ENCODE measurements at regions of chrX and their contacts with region 1.

Region 1: DNA sequence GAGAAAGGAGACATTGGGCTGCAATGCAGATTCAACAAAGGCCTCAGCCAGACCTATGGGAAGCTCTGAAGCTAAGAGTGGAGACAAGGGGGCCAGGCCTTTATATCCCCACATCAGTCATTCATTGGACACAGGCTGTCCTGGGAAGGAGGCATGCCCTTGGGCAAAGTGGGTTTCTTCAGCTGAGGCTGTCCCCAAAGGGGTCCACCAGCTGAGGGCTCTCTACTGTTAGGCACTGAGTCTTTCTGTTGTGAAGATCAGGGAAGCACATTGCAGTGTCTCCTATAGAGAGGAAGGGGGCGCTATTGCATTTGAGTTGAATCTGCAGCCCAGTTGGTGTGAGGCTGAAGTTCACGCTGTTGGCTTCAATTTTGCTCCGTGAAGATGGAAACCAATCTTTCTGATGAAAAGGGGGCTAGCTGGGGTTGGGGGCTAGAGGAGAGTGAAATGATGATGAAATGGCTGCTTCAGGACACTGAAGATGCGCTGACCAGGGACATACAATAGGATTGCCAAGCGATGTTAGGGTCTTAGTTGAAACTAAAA is 48.0 kb downstream of the SLC25A5 start:
- DNase-seq: peak; percentile 75
- ATAC-seq: peak; percentile 65
- H3K4me3 ChIP-seq: no peak overlapping the region
- H3K27ac ChIP-seq: no peak overlapping the region
- H3K4me1 ChIP-seq: peaks cover 4% of the 10 kb centered on the region
- H3K27me3 ChIP-seq: no peaks in the 10 kb centered on the region
- CTCF ChIP-seq: peak; percentile 91

Region 2: GRCh38 chrX:119417844-119418243 is 98.4 kb before region 1 on chrX:
- CTCF ChIA-PET with region 1: no interaction called
- POLR2A ChIA-PET with region 1: no interaction called
- intact Hi-C with region 1: loop called (anchors 2 kb)
- DNase-seq: no peak
- ATAC-seq: peak; percentile 46
- H3K4me3 ChIP-seq: no peak overlapping the region
- H3K27ac ChIP-seq: no peak overlapping the region
- H3K4me1 ChIP-seq: no peaks in the 10 kb centered on the region
- H3K27me3 ChIP-seq: no peaks in the 10 kb centered on the region
- CTCF ChIP-seq: peak; percentile 47

Region 3: DNA sequence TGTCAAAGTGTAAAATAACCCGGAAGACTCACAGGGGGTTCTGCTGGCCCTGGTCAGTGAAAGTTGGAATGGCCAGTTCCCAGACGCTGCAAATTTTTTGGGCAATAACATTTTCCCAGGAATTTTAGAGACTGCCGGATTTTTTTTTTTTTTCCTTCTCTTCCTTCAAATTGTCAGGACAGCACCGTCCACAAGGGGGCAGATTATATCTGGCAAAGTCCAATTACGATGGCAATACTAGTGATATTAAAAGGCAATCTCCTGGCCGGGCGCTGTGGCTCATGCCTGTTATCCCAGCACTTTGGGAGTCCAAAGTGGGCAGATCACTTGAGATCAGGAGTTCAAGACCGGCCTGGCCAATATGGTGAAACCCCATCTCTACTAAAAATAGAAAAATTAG is 27.5 kb before region 1 on chrX:
- CTCF ChIA-PET with region 1: interaction called, 6 read pairs
- POLR2A ChIA-PET with region 1: no interaction called
- intact Hi-C with region 1: loop called (anchors 1 kb)
- DNase-seq: peak; percentile 74
- ATAC-seq: peak; percentile 50; the same call in 1 of the 2 replicates
- H3K4me3 ChIP-seq: no peak overlapping the region
- H3K27ac ChIP-seq: no peak overlapping the region
- H3K4me1 ChIP-seq: no peaks in the 10 kb centered on the region
- H3K27me3 ChIP-seq: no peaks in the 10 kb centered on the region
- CTCF ChIP-seq: peak; percentile 64

Region 4: DNA sequence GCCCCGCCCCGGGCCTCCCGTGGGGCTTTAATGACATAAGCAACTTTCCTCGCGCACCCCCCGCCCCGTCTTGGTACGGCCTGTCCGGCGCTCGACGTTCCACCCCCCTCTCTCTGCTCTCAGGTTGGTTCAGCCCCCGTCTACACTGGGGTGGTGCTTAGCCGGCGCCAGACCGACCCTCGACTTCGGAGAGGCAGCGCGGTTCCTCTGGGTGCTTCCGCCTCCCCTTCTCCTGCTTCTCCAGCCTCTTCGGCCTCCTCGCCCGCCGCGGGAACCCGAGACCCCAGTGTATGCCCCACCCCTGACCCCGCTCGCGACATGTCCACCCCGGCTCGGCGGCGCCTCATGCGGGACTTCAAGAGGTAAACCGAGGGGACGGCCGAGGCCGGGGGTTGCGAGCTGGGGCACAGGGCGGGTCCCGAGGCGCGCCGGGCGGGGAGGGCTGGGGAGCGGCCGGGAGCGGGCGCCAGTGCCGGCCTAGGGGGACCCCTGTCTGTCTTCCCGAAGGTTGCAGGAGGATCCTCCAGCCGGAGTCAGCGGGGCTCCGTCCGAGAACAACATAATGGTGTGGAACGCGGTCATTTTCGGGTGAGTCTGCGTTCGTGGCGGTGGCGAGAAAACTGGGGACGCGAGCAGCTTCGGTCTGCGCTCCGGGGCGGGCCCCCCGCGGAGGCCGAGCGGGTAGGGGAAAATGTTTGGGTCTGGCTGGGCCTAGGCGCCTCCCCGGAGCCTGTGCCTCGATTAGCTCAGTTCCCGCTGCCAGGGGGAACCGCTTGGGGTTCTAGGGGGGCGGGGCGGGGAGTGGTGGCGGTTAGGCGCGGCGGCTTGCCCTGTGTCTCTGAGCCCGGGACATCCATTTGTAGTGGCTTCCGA is 58.4 kb after region 1 on chrX and contains the start of gene UBE2A:
- CTCF ChIA-PET with region 1: interaction called, 3 read pairs
- POLR2A ChIA-PET with region 1: no interaction called
- intact Hi-C with region 1: loop called (anchors 2 kb)
- DNase-seq: peak; percentile 86
- ATAC-seq: peak; percentile 85
- H3K4me3 ChIP-seq: peak within 1 kb of the TSS; percentile 92
- H3K27ac ChIP-seq: peak within 1 kb of the TSS; percentile 71
- H3K4me1 ChIP-seq: peaks cover 19% of the 10 kb centered on the region
- H3K27me3 ChIP-seq: no peaks in the 10 kb centered on the region
- CTCF ChIP-seq: 0 out of 2 replicates have a peak, but pooled peaks have one; percentile 30
- total RNA-seq, gene UBE2A: 36.7 and 46.6 TPM in 2 replicates

Region 5: GRCh38 chrX:119729408-119730201 is 213.4 kb after region 1 on chrX:
- CTCF ChIA-PET with region 1: interaction called, 3 read pairs
- POLR2A ChIA-PET with region 1: no interaction called
- intact Hi-C with region 1: loop called (anchors 1 kb)
- DNase-seq: peak; percentile 74
- ATAC-seq: peak; percentile 68
- H3K4me3 ChIP-seq: no peak overlapping the region
- H3K27ac ChIP-seq: no peak overlapping the region
- H3K4me1 ChIP-seq: no peaks in the 10 kb centered on the region
- H3K27me3 ChIP-seq: no peaks in the 10 kb centered on the region
- CTCF ChIP-seq: peak; percentile 66

Measured in PC-3 (cell line).